AG04449 (cell line): ENCODE measurements at regions of chr9 and their contacts with region 1.

Region 1: DNA sequence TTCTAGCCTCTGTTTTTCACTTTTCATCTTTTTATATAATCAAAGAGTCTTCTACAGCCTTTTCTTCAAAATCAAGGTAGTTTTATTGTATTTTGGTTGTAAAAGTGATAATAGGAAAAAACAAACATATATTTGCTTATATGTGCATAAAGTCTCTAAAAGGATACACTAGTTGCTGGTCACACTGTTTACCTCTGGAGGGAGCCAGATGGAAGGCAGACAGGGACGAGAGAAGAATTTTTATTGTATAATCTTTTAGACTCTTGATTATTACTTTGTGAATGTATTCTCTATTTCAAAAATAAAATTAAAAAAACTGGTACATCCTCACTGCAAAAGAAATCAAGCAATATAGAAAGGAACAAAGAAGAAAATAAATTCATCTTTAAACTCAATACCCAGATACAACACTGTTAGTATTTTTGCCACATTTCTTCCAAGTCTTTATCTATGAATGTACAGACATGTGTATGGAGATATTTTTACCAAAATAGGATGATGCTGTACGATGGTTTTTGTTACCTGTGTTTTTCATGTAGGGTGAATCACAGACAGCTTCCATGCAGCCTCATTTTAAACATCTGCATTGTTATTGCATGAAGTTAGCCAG is 6.1 kb upstream of the RNF183 start:
- DNase-seq: no peak
- H3K4me3 ChIP-seq: no peak overlapping the region
- CTCF ChIP-seq: peak; percentile 55

Region 2: GRCh38 chr9:113150670-113151611 is 158.4 kb before region 1 on chr9 and contains the start of gene SLC31A2:
- CTCF ChIA-PET with region 1: no interaction called
- POLR2A ChIA-PET with region 1: no interaction called
- DNase-seq: no peak
- H3K4me3 ChIP-seq: peak within 1 kb of the TSS; percentile 88
- CTCF ChIP-seq: peak; percentile 39

Region 3: GRCh38 chr9:113164536-113165300 is 144.6 kb before region 1 on chr9:
- CTCF ChIA-PET with region 1: no interaction called
- POLR2A ChIA-PET with region 1: no interaction called
- DNase-seq: no peak
- H3K4me3 ChIP-seq: no peak overlapping the region
- CTCF ChIP-seq: no peak

Region 4: GRCh38 chr9:113293285-113293878 is 15.9 kb before region 1 on chr9:
- CTCF ChIA-PET with region 1: interaction called, 28 read pairs
- POLR2A ChIA-PET with region 1: no interaction called
- DNase-seq: no peak
- H3K4me3 ChIP-seq: no peak overlapping the region
- CTCF ChIP-seq: no peak

Region 5: GRCh38 chr9:113349445-113350094 is 40.3 kb after region 1 on chr9 and contains the start of gene BSPRY:
- CTCF ChIA-PET with region 1: interaction called, 15 read pairs
- POLR2A ChIA-PET with region 1: no interaction called
- DNase-seq: no peak
- H3K4me3 ChIP-seq: no peak within 1 kb of the TSS
- CTCF ChIP-seq: no peak

Region 6: GRCh38 chr9:113361304-113362018 is 52.2 kb after region 1 on chr9:
- CTCF ChIA-PET with region 1: no interaction called
- POLR2A ChIA-PET with region 1: no interaction called
- DNase-seq: no peak
- H3K4me3 ChIP-seq: no peak overlapping the region
- CTCF ChIP-seq: no peak

Region 7: GRCh38 chr9:113410207-113410864 is 101.0 kb after region 1 on chr9 and contains the starts of genes C9orf43 and POLE3:
- CTCF ChIA-PET with region 1: interaction called, 132 read pairs
- POLR2A ChIA-PET with region 1: no interaction called
- DNase-seq: peak; percentile 59
- H3K4me3 ChIP-seq: peak within 1 kb of the TSS; percentile 88
- CTCF ChIP-seq: no peak